ENCODE measurements at regions of chr1 and their contacts with region 1.

Region 1: DNA sequence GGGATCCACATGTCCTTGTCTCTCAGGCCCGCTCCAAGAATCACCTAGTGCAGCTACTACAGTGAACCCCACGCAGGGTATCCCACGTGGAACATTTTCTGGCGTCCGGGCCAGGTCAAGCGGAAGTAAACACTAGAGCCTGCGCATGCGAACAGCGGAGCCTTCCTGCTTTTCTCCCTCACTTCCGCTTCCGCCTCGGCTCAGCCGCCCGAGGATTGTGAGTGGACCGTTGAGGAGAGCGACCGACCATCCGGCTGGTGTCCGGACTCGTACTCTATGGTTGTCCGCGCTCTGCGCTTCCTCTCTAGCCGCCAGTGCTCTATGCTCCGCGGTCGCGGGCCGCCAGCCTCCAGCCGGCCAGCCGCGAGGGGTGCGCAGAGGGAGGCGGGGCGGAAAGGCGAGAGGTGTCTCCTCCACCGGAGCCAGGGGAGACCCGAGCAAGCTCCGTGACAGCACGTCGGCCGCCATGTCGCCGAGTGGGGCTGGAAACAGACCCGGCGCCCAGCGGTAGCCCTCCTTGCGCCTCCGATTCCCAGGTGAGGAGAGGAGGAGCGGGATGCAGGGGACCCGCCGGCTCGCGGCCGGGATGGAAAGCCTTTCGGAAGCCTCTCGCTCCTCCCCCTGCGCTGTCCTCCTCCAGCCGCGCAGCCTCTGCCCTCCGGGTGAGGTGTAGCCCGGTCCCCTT is at the starts of genes CNST and TFB2M:
- DNase-seq: peak; percentile 90 to 96
- ATAC-seq: peak; percentile 82 to 98 (median 89)
- H3K4me3 ChIP-seq: peak within 1 kb of the TSS; percentile 79
- H3K4me3 Mint-ChIP-seq: peak within 1 kb of the TSS; percentile 99
- H3K27ac ChIP-seq: peak within 1 kb of the TSS; percentile 90
- H3K27ac Mint-ChIP-seq: peak within 1 kb of the TSS; percentile 94 to 98
- H3K4me1 ChIP-seq: peaks cover 30% of the 10 kb centered on the region
- H3K4me1 Mint-ChIP-seq: peaks cover 46 to 47% of the 10 kb centered on the region in 2 donors
- H3K27me3 ChIP-seq: no peaks in the 10 kb centered on the region
- H3K27me3 Mint-ChIP-seq: no peaks in the 10 kb centered on the region
- CTCF ChIP-seq: no peak
- total RNA-seq, gene CNST: 48.2 to 56.1 (median 49.7) TPM
- total RNA-seq, gene TFB2M: 13.4 to 15.1 (median 15.1) TPM

Region 2: DNA sequence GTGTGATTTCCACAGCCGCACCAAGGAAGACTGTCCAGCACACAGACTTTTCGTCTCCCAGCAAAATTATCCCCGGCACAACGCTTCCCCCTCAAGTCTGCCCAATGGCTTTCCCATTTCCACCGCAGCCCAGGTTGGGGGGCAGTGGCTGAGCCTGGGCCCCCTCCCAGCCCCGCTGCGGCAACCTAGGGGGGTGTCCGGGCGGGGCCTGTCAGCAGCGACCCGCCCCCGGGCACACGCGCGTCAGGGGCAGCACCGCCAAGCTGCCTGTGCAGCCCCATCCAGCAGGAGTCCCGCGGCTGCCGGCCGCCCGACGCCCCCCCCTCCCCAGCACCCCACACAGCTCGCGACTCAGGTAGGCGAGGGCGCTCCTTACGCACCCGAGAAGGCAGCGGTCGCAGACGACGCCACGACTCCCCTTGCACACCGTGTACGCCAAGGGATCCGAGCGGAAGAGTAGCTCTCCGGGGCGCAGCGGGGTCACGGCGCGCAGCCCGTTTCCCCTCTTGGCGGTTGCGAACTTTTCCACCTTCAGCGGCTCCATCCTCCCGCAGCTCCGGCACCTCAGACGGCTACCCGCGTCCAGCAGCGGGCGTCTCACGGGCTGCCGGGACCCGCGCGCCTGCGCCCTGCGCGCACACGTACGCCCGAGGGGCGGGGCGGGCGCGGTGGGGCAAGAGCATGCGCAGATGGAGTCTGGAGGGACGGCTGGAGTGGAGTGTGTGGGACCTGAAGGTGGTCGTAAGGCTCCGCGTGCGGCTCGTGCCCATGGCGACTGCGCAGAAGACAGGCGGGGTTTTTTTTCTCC is 59.4 kb before region 1 on chr1 and contains the start of gene SMYD3:
- intact Hi-C with region 1: loop called (anchors 2 kb)
- DNase-seq: peak; percentile 70 to 93
- ATAC-seq: peak; percentile 93 to 94 (median 93)
- H3K4me3 ChIP-seq: peak within 1 kb of the TSS; percentile 78
- H3K4me3 Mint-ChIP-seq: peak within 1 kb of the TSS; percentile 91
- H3K27ac ChIP-seq: peak within 1 kb of the TSS; percentile 23
- H3K27ac Mint-ChIP-seq: peak within 1 kb of the TSS; percentile 69 to 82
- H3K4me1 ChIP-seq: peaks cover 13% of the 10 kb centered on the region
- H3K4me1 Mint-ChIP-seq: peaks cover 24 to 33% of the 10 kb centered on the region in 2 donors
- H3K27me3 ChIP-seq: no peaks in the 10 kb centered on the region
- H3K27me3 Mint-ChIP-seq: no peaks in the 10 kb centered on the region
- CTCF ChIP-seq: no peak
- total RNA-seq, gene SMYD3: 43.6 to 48.0 (median 46.1) TPM

Region 3: GRCh38 chr1:246602194-246602593 is 35.9 kb after region 1 on chr1:
- intact Hi-C with region 1: loop called (anchors 5 kb)
- DNase-seq: peak in 1 of 2 donors; percentile 27
- ATAC-seq: peak; percentile 72 to 84 (median 74)
- H3K4me3 ChIP-seq: no peak overlapping the region
- H3K4me3 Mint-ChIP-seq: peak overlapping the region; percentile 8
- H3K27ac ChIP-seq: no peak overlapping the region
- H3K27ac Mint-ChIP-seq: peak overlapping the region in 1 of 2 donors; percentile 50
- H3K4me1 ChIP-seq: peaks cover 12% of the 10 kb centered on the region
- H3K4me1 Mint-ChIP-seq: peaks cover 47 to 48% of the 10 kb centered on the region in 2 donors
- H3K27me3 ChIP-seq: no peaks in the 10 kb centered on the region
- H3K27me3 Mint-ChIP-seq: no peaks in the 10 kb centered on the region
- CTCF ChIP-seq: no peak